Calu3 (cell line): ENCODE measurements at regions of chr2 and their contacts with region 1.

Region 1: DNA sequence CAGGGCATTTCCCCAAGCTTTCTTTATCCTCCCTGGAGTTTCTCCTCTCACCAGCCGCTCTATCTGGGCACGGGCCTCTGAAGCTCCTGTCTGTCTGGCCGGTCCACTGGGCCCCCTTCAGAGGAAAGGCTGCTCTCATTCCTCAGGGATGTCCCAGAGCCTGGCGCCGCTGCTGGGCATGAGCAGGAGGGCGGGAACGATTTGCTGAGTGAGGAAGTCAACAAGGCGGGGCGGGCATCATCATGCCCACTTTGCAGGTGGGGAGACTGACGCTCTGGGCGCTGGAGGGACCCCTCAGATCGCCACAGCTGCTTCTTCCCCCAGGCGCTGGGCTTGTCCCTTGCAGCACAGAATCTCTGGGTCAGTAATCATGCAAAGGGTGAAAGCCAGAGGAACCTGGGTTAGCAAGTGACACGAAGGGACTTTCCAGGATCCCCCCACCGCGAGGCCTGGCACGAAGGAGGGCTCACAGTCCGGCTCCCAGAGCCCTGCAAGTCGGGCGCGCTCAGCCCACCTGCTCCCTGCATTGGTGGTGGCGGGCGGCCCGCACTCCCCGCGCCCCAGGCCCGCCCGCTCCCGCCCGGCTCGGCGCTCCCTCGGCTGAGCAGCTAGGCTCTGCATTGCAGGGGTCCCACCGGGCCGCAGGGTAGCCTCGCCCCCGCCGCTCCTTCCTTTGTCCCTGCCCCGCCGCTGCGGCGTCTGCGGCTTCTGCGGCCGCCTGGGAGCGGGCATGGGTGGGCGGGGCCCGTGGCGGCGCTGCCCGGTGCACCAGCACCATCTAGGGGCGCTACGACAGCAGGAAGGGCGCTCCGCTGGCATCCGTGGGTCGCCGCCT is 157.8 kb downstream of the CYRIA start:
- DNase-seq: peak; percentile 68
- H3K4me3 Mint-ChIP-seq: peak overlapping the region; percentile 58
- H3K27ac Mint-ChIP-seq: no peak overlapping the region
- H3K4me1 Mint-ChIP-seq: no peaks in the 10 kb centered on the region
- H3K27me3 Mint-ChIP-seq: peaks cover 55% of the 10 kb centered on the region
- CTCF ChIP-seq: peak; percentile 49

Region 2: GRCh38 chr2:15927581-15928218 is 580.2 kb before region 1 on chr2:
- CTCF ChIA-PET with region 1: no interaction called
- intact Hi-C with region 1: loop called (anchors 5 kb)
- DNase-seq: no peak
- H3K4me3 Mint-ChIP-seq: no peak overlapping the region
- H3K27ac Mint-ChIP-seq: no peak overlapping the region
- H3K4me1 Mint-ChIP-seq: no peaks in the 10 kb centered on the region
- H3K27me3 Mint-ChIP-seq: peaks cover 16% of the 10 kb centered on the region
- CTCF ChIP-seq: no peak

Region 3: GRCh38 chr2:16425462-16426336 is 82.2 kb before region 1 on chr2:
- CTCF ChIA-PET with region 1: no interaction called
- intact Hi-C with region 1: no loop called
- DNase-seq: peak; percentile 79
- H3K4me3 Mint-ChIP-seq: no peak overlapping the region
- H3K27ac Mint-ChIP-seq: no peak overlapping the region
- H3K4me1 Mint-ChIP-seq: peaks cover 8% of the 10 kb centered on the region
- H3K27me3 Mint-ChIP-seq: peaks cover 16% of the 10 kb centered on the region
- CTCF ChIP-seq: no peak